ENCODE measurements at regions of chr2 and their contacts with region 1.

Region 1: DNA sequence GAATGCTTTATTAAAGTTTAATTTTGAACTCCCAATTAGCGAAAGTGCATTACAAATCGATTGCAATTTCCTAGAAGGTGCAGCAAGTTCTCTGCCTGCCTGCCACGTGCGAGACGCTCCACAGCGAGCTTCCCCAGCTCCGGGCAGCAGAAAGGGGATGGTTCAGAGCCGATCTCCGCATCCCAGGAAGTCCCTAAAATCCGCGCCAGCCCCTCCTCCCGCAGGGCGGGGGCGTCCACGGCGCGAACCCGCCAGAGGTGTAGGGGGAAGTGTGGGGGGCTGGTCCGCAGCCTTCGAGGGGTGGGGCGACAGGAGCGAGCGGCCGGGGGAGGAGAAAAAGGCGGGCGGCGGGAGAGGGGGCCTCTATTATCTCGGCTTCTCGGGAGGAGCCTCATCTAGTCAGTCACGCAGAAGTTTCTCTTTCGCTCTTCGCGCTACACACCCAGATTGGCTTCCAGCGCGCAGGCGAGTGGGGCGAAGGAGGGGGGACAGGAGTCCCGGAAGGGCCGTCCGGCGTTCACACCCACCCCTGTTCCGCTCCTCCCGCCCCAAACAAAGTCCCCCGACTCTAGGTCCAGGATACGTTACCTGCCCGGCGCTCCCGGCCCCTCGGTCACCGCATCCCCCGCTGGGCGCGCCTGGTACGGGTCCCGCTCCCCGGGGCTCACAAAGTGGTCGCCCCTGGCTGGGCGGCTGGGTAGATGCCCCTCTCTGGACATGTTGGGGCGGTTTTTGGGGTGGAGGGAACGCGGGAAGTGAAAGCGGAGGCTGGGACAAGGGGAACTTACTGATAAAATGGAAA is 9.1 kb upstream of the NR4A2 start:
- DNase-seq: peak; percentile 96
- H3K4me3 Mint-ChIP-seq: peak overlapping the region; percentile 93
- H3K27ac Mint-ChIP-seq: peak overlapping the region; percentile 99
- H3K4me1 Mint-ChIP-seq: peaks cover 48% of the 10 kb centered on the region
- H3K27me3 Mint-ChIP-seq: no peaks in the 10 kb centered on the region

Region 2: DNA sequence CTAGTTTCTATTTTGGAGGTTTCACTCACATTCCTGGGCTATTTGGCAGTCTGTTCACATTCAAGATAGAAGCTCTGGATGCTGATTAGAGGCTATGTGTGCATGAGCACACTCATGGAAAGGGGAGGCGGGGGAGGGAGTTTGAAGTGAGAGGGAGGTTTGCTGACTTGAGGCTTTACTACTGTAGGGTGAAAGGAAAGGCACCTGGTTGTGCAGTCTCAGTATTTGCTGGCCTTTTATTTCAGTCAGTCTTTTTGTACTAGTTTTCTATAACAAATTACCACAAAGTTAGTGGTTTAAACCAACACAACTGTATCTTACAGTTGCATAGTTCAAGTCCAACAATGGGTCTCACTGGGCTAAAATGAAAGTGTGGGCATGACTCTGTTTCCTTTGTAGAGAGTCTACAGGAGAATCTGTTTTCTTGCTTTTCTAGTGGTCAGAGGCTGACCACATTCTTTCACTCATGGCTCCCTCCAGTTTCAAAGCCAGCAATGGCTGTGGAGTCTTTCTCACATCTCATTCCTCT is 38.5 kb after region 1 on chr2:
- intact Hi-C with region 1: loop called (anchors 1 kb)
- DNase-seq: no peak
- H3K4me3 Mint-ChIP-seq: no peak overlapping the region
- H3K27ac Mint-ChIP-seq: peak overlapping the region; percentile 56
- H3K4me1 Mint-ChIP-seq: peaks cover 29% of the 10 kb centered on the region
- H3K27me3 Mint-ChIP-seq: no peaks in the 10 kb centered on the region

Region 3: DNA sequence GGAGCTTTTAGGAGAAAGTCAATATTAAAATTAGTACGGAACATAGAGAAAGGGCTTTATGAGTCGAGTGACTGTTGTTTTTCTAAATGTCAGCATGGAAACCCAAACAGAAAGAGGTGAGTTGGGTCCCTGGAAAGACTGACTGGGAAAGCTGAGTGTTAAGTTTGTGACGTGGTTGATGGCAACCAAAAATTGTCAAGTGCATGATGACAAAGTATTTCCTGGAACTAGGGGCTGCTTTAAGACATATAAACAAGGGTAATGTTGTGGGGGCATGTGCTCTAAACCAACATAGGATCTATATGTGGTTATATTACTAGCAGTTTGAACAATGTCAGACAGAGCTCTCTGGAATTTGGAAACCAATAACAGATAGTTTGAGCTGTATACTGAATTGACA is 43.6 kb after region 1 on chr2:
- intact Hi-C with region 1: loop called (anchors 1 kb)
- DNase-seq: no peak
- H3K4me3 Mint-ChIP-seq: peak overlapping the region; percentile 3
- H3K27ac Mint-ChIP-seq: peak overlapping the region; percentile 78
- H3K4me1 Mint-ChIP-seq: peaks cover 37% of the 10 kb centered on the region
- H3K27me3 Mint-ChIP-seq: no peaks in the 10 kb centered on the region

Region 4: DNA sequence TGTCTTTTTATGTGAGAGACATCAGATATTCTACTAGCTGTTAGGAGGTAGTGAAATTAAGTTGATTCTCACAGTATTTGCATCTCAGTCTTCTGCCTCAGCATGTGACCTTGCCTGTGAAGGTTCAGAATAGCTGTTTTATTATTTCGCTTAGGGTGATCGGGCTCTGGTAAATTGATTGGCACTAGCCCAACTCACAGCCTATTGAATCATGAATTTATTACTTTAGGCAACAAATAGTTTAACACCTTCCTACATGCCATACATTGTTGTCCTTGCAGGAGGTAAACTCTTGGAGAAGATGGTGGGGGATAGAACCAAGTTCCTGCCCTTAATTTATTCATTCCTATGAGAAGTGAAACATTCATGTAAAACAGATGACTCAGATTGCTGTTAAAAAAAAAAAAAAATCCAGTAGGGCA is 196.4 kb after region 1 on chr2:
- intact Hi-C with region 1: loop called (anchors 5 kb)
- DNase-seq: no peak
- H3K4me3 Mint-ChIP-seq: no peak overlapping the region
- H3K27ac Mint-ChIP-seq: no peak overlapping the region
- H3K4me1 Mint-ChIP-seq: peaks cover 21% of the 10 kb centered on the region
- H3K27me3 Mint-ChIP-seq: no peaks in the 10 kb centered on the region

Region 5: GRCh38 chr2:156765450-156765849 is 423.8 kb after region 1 on chr2:
- intact Hi-C with region 1: no loop called
- DNase-seq: no peak
- H3K4me3 Mint-ChIP-seq: no peak overlapping the region
- H3K27ac Mint-ChIP-seq: no peak overlapping the region
- H3K4me1 Mint-ChIP-seq: no peaks in the 10 kb centered on the region
- H3K27me3 Mint-ChIP-seq: no peaks in the 10 kb centered on the region

Measured in activated CD4-positive, alpha-beta T cell treated with anti-CD3 and anti-CD28 coated beads, Interleukin-2, amount 10 ng/mL, durations not matched to agents 24 days and 14 days (primary cell).